A673 (cell line): ENCODE measurements at regions of chr11 and their contacts with region 1.

Region 1: GRCh38 chr11:111841370-111842053 is 29.9 kb downstream of the ALG9 start:
- DNase-seq: peak; percentile 92
- H3K4me3 ChIP-seq: no peak overlapping the region
- H3K27ac ChIP-seq: no peak overlapping the region
- H3K4me1 ChIP-seq: peaks cover 22% of the 10 kb centered on the region
- H3K27me3 ChIP-seq: no peaks in the 10 kb centered on the region
- CTCF ChIP-seq: peak; percentile 98

Region 2: GRCh38 chr11:110777775-110778174 is 1063.7 kb before region 1 on chr11:
- CTCF ChIA-PET with region 1: no interaction called
- POLR2A ChIA-PET with region 1: no interaction called
- intact Hi-C with region 1: no loop called
- DNase-seq: peak; percentile 44
- H3K4me3 ChIP-seq: no peak overlapping the region
- H3K27ac ChIP-seq: no peak overlapping the region
- H3K4me1 ChIP-seq: peaks cover 5% of the 10 kb centered on the region
- H3K27me3 ChIP-seq: no peaks in the 10 kb centered on the region
- CTCF ChIP-seq: no peak

Region 3: DNA sequence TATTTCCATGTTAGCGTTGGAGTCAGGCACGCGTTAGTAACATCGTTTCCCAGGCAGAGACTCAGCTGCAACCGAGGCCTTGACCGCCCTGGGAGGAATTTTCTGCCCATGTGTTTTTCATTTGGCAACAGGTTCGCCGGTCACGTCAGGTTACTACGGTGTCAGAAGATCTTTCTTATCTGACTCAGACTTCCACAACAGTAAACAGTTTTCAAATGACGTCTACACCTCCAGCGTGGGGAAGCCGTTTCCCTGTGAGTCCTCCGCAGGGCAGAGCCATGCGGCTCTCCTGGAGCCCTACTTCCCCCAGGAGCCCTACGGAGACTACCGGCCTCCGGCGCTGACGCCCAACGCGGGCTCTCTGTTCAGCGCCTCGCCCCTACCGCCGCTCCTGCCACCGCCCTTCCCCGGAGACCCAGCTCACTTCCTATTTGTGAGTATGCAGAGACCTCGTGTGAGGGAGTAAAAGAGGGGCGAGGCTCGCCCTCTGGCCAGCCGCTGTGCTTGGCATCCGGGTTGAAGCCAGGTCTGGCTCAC is 557.5 kb before region 1 on chr11:
- CTCF ChIA-PET with region 1: no interaction called
- POLR2A ChIA-PET with region 1: no interaction called
- intact Hi-C with region 1: loop called (anchors 10 kb)
- DNase-seq: no peak
- H3K4me3 ChIP-seq: no peak overlapping the region
- H3K27ac ChIP-seq: no peak overlapping the region
- H3K4me1 ChIP-seq: no peaks in the 10 kb centered on the region
- H3K27me3 ChIP-seq: no peaks in the 10 kb centered on the region
- CTCF ChIP-seq: no peak

Region 4: GRCh38 chr11:111296196-111296595 is 545.3 kb before region 1 on chr11:
- CTCF ChIA-PET with region 1: no interaction called
- POLR2A ChIA-PET with region 1: no interaction called
- intact Hi-C with region 1: no loop called
- DNase-seq: no peak
- H3K4me3 ChIP-seq: no peak overlapping the region
- H3K27ac ChIP-seq: no peak overlapping the region
- H3K4me1 ChIP-seq: peaks cover 6% of the 10 kb centered on the region
- H3K27me3 ChIP-seq: no peaks in the 10 kb centered on the region
- CTCF ChIP-seq: no peak

Region 5: GRCh38 chr11:111565114-111565720 is 276.3 kb before region 1 on chr11:
- CTCF ChIA-PET with region 1: interaction called, 3 read pairs
- POLR2A ChIA-PET with region 1: no interaction called
- intact Hi-C with region 1: loop called (anchors 2 kb)
- DNase-seq: peak; percentile 88
- H3K4me3 ChIP-seq: no peak overlapping the region
- H3K27ac ChIP-seq: peak overlapping the region; percentile 43
- H3K4me1 ChIP-seq: no peaks in the 10 kb centered on the region
- H3K27me3 ChIP-seq: no peaks in the 10 kb centered on the region
- CTCF ChIP-seq: peak; percentile 91

Region 6: DNA sequence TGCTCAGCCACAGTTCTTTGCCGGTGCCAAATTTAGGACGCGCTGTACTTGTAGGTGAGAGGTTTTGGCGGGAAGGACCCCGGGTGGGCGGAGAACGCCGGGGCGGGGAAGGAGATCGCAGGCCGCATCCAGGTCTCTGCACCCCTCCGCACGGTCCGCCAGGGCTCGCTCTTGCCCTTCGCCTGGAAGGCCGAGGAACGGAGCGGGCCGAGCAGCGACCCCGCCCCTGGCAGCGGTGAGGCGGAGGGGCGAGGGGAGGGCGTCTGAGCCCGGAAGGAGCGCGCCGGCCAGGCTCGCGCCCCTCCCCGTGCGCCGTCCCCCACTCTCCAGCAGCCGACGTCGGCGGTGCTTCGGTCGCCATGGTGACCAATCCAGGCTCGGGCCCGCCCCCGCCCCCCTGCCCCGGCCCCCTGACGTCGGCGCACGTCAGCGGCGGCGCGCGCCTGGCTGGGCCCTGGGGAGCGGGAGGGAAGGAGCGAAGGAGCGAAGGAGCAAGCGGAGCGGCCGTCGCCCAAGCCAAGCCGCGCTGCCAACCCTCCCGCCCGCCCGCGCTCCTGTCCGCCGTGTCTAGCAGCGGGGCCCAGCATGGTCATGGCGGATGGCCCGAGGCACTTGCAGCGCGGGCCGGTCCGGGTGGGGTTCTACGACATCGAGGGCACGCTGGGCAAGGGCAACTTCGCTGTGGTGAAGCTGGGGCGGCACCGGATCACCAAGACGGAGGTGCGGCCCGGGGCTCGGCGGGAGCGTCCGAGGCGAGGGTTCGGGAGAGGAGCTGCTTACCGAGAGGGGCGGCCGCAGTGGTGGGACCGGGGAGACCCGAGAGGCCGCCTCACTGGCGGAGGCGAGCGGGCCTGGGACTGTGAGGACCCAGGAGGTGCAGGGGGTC is 239.3 kb before region 1 on chr11 and contains the start of gene SIK2:
- CTCF ChIA-PET with region 1: interaction called, 5 read pairs
- POLR2A ChIA-PET with region 1: no interaction called
- intact Hi-C with region 1: loop called (anchors 1 kb)
- DNase-seq: peak; percentile 99
- H3K4me3 ChIP-seq: peak within 1 kb of the TSS; percentile 75
- H3K27ac ChIP-seq: peak within 1 kb of the TSS; percentile 93
- H3K4me1 ChIP-seq: peaks cover 39% of the 10 kb centered on the region
- H3K27me3 ChIP-seq: no peaks in the 10 kb centered on the region
- CTCF ChIP-seq: peak; percentile 91
- total RNA-seq, gene SIK2: 18.7 and 21.5 TPM in 2 replicates

Region 7: DNA sequence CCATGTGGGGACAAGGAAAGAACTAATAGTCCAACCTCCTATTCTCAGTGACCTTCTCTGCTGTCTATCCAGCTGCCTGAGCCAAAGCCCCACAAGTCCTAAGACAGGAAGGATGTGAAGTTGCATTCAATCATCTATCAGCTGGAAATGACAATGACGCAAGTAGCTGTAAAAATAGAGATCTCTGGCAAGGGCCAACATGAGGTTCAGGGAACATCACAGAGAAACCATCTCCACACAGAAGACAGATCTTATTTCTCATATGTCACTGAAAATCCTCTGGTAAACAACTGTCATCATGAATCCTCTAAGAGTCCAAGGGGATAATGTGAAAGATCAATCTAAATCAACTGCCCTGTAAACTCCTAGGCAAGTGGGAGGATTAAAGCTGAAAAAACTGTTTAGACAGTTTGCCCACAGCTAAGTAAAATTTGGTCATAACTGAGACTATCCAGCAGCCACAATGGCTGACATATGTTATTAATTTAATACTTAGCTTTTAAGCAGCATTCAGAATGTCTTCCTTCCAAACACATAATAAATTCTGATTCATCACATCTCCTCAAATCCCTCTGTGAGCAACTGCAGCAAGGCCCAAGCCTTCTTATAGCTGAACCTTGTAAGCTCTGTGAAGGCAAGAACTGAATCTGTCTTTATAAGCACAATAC is 22.2 kb before region 1 on chr11:
- CTCF ChIA-PET with region 1: interaction called, 3 read pairs
- POLR2A ChIA-PET with region 1: interaction called, 13 read pairs
- intact Hi-C with region 1: no loop called
- DNase-seq: peak; percentile 71
- H3K4me3 ChIP-seq: no peak overlapping the region
- H3K27ac ChIP-seq: peak overlapping the region; percentile 84
- H3K4me1 ChIP-seq: peaks cover 35% of the 10 kb centered on the region
- H3K27me3 ChIP-seq: no peaks in the 10 kb centered on the region
- CTCF ChIP-seq: no peak